Activated B cell treated with CpG ODN at 0.5 μM for 24 hours (primary cell): ENCODE measurements at regions of chr1 and their contacts with region 1.

Region 1: GRCh38 chr1:43227143-43227764 is 42.5 kb upstream of the TMEM125 start:
- DNase-seq: peak; percentile 76
- ATAC-seq: peak; percentile 96
- H3K4me3 Mint-ChIP-seq: no peak overlapping the region
- H3K27ac Mint-ChIP-seq: no peak overlapping the region
- H3K4me1 Mint-ChIP-seq: peaks cover 12% of the 10 kb centered on the region
- H3K27me3 Mint-ChIP-seq: no peaks in the 10 kb centered on the region
- CTCF ChIP-seq: peak; percentile 47

Region 2: GRCh38 chr1:42777852-42778251 is 449.4 kb before region 1 on chr1:
- CTCF ChIA-PET with region 1: no interaction called
- POLR2A ChIA-PET with region 1: interaction called, 6 read pairs
- intact Hi-C with region 1: loop called (anchors 5 kb)
- DNase-seq: no peak
- ATAC-seq: peak; percentile 71
- H3K4me3 Mint-ChIP-seq: no peak overlapping the region
- H3K27ac Mint-ChIP-seq: no peak overlapping the region
- H3K4me1 Mint-ChIP-seq: peaks cover 4% of the 10 kb centered on the region
- H3K27me3 Mint-ChIP-seq: no peaks in the 10 kb centered on the region
- CTCF ChIP-seq: no peak

Region 3: GRCh38 chr1:43107664-43108063 is 119.6 kb before region 1 on chr1:
- CTCF ChIA-PET with region 1: no interaction called
- POLR2A ChIA-PET with region 1: no interaction called
- intact Hi-C with region 1: no loop called
- DNase-seq: no peak
- ATAC-seq: no peak
- H3K4me3 Mint-ChIP-seq: no peak overlapping the region
- H3K27ac Mint-ChIP-seq: no peak overlapping the region
- H3K4me1 Mint-ChIP-seq: no peaks in the 10 kb centered on the region
- H3K27me3 Mint-ChIP-seq: peaks cover 4% of the 10 kb centered on the region
- CTCF ChIP-seq: no peak

Region 4: DNA sequence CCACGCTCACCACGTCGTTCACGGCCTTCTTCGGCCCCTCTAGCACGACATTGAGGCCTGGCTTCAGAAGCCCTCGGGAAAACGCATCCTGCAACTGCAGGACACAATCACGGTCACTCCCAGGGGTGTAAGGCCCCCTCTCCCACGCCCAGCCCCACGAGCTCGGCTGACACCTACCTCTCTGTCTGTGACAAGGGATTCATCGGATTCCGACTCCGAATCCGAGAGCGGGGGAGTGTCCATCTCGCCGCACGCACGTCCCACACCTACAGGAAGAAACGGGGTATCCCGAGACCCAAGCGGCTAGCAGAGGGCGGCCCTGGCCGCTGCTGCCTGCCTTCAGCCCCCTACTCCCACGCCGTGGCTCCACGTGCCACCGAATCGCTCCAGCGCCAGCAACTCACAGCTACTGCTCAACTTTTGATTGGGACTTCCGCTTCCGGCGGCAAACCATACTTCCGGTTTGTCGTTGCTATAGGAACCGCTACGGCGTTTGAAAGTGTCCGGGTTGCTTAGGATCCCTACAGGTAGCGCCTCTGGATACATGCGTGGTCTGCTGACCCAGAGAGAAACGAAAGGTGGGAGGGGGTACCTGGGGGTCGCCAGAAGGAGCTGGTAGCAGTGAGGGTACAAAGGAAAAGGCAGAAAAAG is 55.3 kb before region 1 on chr1 and contains the starts of genes CFAP57 and EBNA1BP2:
- CTCF ChIA-PET with region 1: interaction called, 4 read pairs
- POLR2A ChIA-PET with region 1: interaction called, 3 read pairs
- intact Hi-C with region 1: loop called (anchors 2 kb)
- DNase-seq: peak; percentile 84
- ATAC-seq: peak; percentile 82
- H3K4me3 Mint-ChIP-seq: peak within 1 kb of the TSS; percentile 99
- H3K27ac Mint-ChIP-seq: peak within 1 kb of the TSS; percentile 95
- H3K4me1 Mint-ChIP-seq: peaks cover 32% of the 10 kb centered on the region
- H3K27me3 Mint-ChIP-seq: peaks cover 20% of the 10 kb centered on the region
- CTCF ChIP-seq: no peak
- total RNA-seq, gene CFAP57: 0.93 TPM in 1 of 2 replicates, not detected in the other
- total RNA-seq, gene EBNA1BP2: 59.9 and 61.8 TPM in 2 replicates

Region 5: GRCh38 chr1:43389326-43390313 is 162.4 kb after region 1 on chr1 and contains the starts of genes MED8 and SZT2:
- CTCF ChIA-PET with region 1: interaction called, 12 read pairs
- POLR2A ChIA-PET with region 1: interaction called, 3 read pairs
- intact Hi-C with region 1: no loop called
- DNase-seq: peak; percentile 90
- ATAC-seq: peak; percentile 91
- H3K4me3 Mint-ChIP-seq: peak within 1 kb of the TSS; percentile 99
- H3K27ac Mint-ChIP-seq: peak within 1 kb of the TSS; percentile 91
- H3K4me1 Mint-ChIP-seq: peaks cover 38% of the 10 kb centered on the region
- H3K27me3 Mint-ChIP-seq: no peaks in the 10 kb centered on the region
- CTCF ChIP-seq: no peak
- total RNA-seq, gene MED8: 33.8 and 37.2 TPM in 2 replicates
- total RNA-seq, gene SZT2: 108 and 139 TPM in 2 replicates

Region 6: GRCh38 chr1:43529206-43529731 is 302.0 kb after region 1 on chr1:
- CTCF ChIA-PET with region 1: no interaction called
- POLR2A ChIA-PET with region 1: no interaction called
- intact Hi-C with region 1: loop called (anchors 1 kb)
- DNase-seq: peak; percentile 65
- ATAC-seq: peak; percentile 70
- H3K4me3 Mint-ChIP-seq: peak overlapping the region; percentile 50
- H3K27ac Mint-ChIP-seq: no peak overlapping the region
- H3K4me1 Mint-ChIP-seq: peaks cover 12% of the 10 kb centered on the region
- H3K27me3 Mint-ChIP-seq: peaks cover 42% of the 10 kb centered on the region
- CTCF ChIP-seq: peak; percentile 87

Region 7: DNA sequence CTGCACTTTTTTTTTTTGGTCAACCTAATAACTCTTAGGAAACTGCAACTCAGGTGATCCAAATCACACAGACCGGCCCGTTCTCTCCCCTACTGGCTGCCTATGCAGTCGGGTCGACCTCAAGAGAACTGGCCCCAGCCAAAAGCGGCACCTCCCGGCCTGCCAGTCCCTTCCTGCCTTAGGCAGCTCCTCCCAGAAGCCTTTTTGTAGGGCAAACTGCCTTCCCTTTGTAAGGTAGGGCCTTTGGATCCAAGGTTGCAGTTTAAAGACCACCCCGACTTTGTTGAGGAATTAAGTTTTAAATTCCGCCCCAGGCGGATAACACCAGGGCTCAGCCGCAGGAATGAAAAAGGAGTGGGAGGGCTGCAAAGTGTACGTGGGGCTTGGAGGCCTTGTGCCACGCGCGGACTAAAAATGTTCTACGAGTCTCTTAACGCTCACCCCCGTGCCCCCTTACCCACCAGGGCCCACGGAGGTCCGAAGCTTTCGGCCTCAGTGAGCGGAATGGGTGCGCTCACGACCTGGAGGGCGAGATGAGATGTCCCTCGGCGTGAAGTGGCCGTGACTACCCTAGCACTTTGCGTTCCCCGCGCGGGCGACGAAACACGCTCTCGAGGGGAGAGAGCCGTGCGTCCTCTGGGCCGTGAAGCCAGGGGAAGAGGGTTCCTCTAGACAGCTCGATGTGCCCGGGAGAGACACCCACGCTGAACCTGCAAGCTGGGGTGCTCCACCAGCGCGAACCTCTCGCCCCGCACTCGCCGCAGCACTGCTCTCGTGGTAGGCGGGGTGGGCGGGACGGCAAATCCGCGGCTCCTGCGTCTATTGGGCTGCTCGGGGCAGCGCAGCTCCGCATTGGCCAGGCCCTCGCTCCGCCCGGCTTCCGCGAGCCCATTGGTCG is 479.6 kb after region 1 on chr1:
- CTCF ChIA-PET with region 1: no interaction called
- POLR2A ChIA-PET with region 1: no interaction called
- intact Hi-C with region 1: loop called (anchors 10 kb)
- DNase-seq: no peak
- ATAC-seq: peak; percentile 97
- H3K4me3 Mint-ChIP-seq: peak overlapping the region; percentile 86
- H3K27ac Mint-ChIP-seq: peak overlapping the region; percentile 63
- H3K4me1 Mint-ChIP-seq: peaks cover 33% of the 10 kb centered on the region
- H3K27me3 Mint-ChIP-seq: no peaks in the 10 kb centered on the region
- CTCF ChIP-seq: no peak

Region 8: GRCh38 chr1:43934101-43934985 is 707.1 kb after region 1 on chr1:
- CTCF ChIA-PET with region 1: interaction called, 7 read pairs
- POLR2A ChIA-PET with region 1: no interaction called
- intact Hi-C with region 1: loop called (anchors 1 kb)
- DNase-seq: peak; percentile 37
- ATAC-seq: peak; percentile 67
- H3K4me3 Mint-ChIP-seq: peak overlapping the region; percentile 62
- H3K27ac Mint-ChIP-seq: no peak overlapping the region
- H3K4me1 Mint-ChIP-seq: peaks cover 19% of the 10 kb centered on the region
- H3K27me3 Mint-ChIP-seq: peaks cover 22% of the 10 kb centered on the region
- CTCF ChIP-seq: no peak

Region 9: GRCh38 chr1:44025816-44026215 is 798.6 kb after region 1 on chr1:
- CTCF ChIA-PET with region 1: no interaction called
- POLR2A ChIA-PET with region 1: no interaction called
- intact Hi-C with region 1: no loop called
- DNase-seq: no peak
- ATAC-seq: no peak
- H3K4me3 Mint-ChIP-seq: peak overlapping the region; percentile 41
- H3K27ac Mint-ChIP-seq: peak overlapping the region; percentile 81
- H3K4me1 Mint-ChIP-seq: peaks cover 38% of the 10 kb centered on the region
- H3K27me3 Mint-ChIP-seq: no peaks in the 10 kb centered on the region
- CTCF ChIP-seq: no peak